MCF 10A (cell line): ENCODE measurements at regions of chr11 and their contacts with region 1.

Region 1: DNA sequence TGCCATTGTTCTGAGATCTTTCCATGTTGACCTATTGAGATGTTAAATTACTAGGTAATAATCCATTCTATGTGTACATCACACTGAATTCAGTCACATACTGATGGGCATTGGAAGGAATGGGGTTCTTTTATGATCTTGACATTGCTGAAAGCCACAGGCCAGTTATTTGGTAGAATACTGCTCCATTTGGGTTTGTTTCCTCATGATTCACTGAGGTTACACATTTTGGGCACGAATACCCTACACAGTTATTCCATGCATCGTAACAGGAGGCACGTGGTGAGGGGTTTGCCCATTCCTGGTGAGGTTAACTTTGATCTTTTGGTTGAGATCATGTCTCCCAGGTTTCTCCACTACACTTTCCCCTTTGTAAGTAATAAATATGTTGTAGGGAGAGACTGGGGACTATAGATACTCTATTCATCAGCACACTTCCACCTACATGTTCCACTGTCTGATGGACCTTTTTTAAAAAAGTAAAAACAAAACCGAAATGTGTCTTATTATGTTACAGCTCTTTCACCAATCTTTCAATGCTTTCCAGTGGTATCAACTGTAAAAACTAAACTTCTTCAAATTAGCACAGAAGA is 12.0 kb upstream of the FOLR1 start:
- DNase-seq: no peak
- H3K4me3 Mint-ChIP-seq: no peak overlapping the region
- H3K27ac Mint-ChIP-seq: peak overlapping the region; percentile 44
- H3K4me1 Mint-ChIP-seq: peaks cover 22% of the 10 kb centered on the region
- H3K27me3 Mint-ChIP-seq: no peaks in the 10 kb centered on the region
- CTCF ChIP-seq: no peak

Region 2: DNA sequence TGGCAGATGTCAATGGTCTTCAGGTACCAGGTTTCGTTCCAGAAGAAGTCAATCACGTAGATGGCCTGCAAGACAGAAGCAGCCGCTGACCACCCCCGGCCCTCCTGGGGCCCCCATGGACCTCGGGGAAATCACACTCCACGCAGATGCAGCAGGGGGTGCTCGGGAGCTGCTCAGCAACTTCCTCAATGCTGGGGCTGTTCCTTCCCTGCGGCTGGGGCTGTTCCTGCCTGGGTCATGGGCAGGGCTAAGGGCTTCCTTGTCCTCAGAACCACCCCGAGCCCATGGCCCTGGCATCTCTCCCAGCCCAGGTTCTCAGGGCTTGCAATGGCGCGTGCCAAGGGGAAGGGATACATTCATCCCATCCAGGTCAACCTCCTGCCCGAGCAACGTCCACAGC is 742.0 kb before region 1 on chr11:
- CTCF ChIA-PET with region 1: no interaction called
- POLR2A ChIA-PET with region 1: no interaction called
- intact Hi-C with region 1: no loop called
- DNase-seq: no peak
- H3K4me3 Mint-ChIP-seq: no peak overlapping the region
- H3K27ac Mint-ChIP-seq: no peak overlapping the region
- H3K4me1 Mint-ChIP-seq: peaks cover 14% of the 10 kb centered on the region
- H3K27me3 Mint-ChIP-seq: no peaks in the 10 kb centered on the region
- CTCF ChIP-seq: no peak

Region 3: DNA sequence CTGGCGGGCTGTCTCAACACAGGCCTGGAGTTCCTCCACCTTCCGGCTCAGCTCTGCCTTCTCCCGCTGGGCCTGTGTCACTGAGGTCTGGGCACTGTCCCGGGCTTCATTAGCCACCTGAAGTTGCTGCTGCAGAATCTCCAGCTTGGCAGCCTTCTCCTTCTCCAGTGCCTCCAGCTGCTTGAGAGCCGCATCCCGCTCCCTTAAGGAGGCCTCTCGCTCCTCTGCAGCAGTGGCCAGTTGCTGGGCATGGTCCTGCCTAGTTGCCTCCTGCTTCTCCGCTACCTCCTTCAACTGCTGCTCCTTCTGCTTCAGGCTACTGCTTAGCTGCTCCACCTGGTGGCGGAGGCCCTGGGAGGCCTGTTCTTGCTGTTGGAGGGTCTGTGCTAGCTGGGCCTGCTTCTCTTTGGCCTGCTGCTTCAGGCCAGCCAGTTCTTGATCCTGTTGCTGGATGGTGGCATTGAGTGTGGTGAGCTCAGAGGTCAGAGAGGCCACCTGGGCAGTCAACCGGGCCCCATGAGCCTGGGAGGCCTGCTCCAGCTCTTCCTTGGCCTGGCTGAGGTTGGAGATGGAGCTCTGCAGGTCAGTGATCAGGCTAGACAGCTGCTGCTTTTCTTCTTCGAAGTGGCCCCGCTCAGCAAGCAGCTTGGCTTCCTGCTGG is 164.3 kb before region 1 on chr11:
- CTCF ChIA-PET with region 1: interaction called, 24 read pairs
- POLR2A ChIA-PET with region 1: interaction called, 4 read pairs
- intact Hi-C with region 1: no loop called
- DNase-seq: no peak
- H3K4me3 Mint-ChIP-seq: no peak overlapping the region
- H3K27ac Mint-ChIP-seq: no peak overlapping the region
- H3K4me1 Mint-ChIP-seq: peaks cover 34% of the 10 kb centered on the region
- H3K27me3 Mint-ChIP-seq: no peaks in the 10 kb centered on the region
- CTCF ChIP-seq: peak; percentile 20

Region 4: DNA sequence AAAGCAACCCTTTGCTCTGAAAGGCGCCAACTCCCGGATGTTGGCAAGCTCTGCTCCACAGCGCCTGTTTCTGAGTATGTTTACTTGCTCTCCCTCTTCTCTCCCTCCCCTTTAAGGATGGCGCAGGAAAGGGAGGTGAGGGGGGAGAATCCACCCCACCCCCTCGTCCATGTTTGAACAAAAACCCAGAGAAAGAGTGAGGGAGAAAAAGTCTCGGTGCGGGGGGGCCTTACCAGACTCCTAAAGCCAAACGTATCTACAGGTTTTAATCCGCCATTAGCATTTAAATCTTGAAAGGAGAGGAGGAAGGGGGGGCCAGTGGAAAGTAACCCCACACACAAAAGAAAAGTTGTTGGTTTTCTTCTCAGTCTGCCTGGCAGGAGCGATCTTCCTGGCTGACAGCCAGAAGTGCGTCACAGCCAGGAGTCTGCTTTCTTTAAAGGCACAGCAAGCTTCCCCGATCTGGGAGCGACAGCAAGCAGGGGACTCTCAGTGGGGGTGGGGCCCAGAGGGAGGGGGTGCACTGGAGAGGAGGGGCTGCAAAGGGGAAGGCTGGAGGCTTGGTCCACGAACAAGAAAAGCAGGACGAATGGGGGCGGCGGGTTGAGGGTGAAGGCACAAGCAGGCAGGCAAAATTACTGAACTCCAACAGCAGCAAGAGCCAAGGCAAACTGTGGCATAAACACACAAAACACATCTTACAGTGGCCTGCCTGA is 139.0 kb before region 1 on chr11:
- CTCF ChIA-PET with region 1: interaction called, 13 read pairs
- POLR2A ChIA-PET with region 1: interaction called, 11 read pairs
- intact Hi-C with region 1: no loop called
- DNase-seq: peak; percentile 91
- H3K4me3 Mint-ChIP-seq: no peak overlapping the region
- H3K27ac Mint-ChIP-seq: no peak overlapping the region
- H3K4me1 Mint-ChIP-seq: peaks cover 26% of the 10 kb centered on the region
- H3K27me3 Mint-ChIP-seq: no peaks in the 10 kb centered on the region
- CTCF ChIP-seq: no peak

Region 5: GRCh38 chr11:72102946-72103753 is 76.8 kb before region 1 on chr11 and contains the start of gene LAMTOR1:
- CTCF ChIA-PET with region 1: interaction called, 47 read pairs
- POLR2A ChIA-PET with region 1: interaction called, 17 read pairs
- intact Hi-C with region 1: no loop called
- DNase-seq: peak; percentile 98
- H3K4me3 Mint-ChIP-seq: peak within 1 kb of the TSS; percentile 100
- H3K27ac Mint-ChIP-seq: peak within 1 kb of the TSS; percentile 100
- H3K4me1 Mint-ChIP-seq: peaks cover 43% of the 10 kb centered on the region
- H3K27me3 Mint-ChIP-seq: no peaks in the 10 kb centered on the region
- CTCF ChIP-seq: peak; percentile 29
- total RNA-seq, gene LAMTOR1: 76.9 and 82.4 TPM in 2 replicates

Region 6: GRCh38 chr11:72209101-72209500 is 29.2 kb after region 1 on chr11:
- CTCF ChIA-PET with region 1: interaction called, 12 read pairs
- POLR2A ChIA-PET with region 1: no interaction called
- intact Hi-C with region 1: no loop called
- DNase-seq: no peak
- H3K4me3 Mint-ChIP-seq: no peak overlapping the region
- H3K27ac Mint-ChIP-seq: no peak overlapping the region
- H3K4me1 Mint-ChIP-seq: no peaks in the 10 kb centered on the region
- H3K27me3 Mint-ChIP-seq: peaks cover 26% of the 10 kb centered on the region
- CTCF ChIP-seq: no peak

Region 7: GRCh38 chr11:72413914-72414628 is 234.2 kb after region 1 on chr11:
- CTCF ChIA-PET with region 1: interaction called, 18 read pairs
- POLR2A ChIA-PET with region 1: no interaction called
- intact Hi-C with region 1: loop called (anchors 1 kb)
- DNase-seq: peak; percentile 85
- H3K4me3 Mint-ChIP-seq: no peak overlapping the region
- H3K27ac Mint-ChIP-seq: no peak overlapping the region
- H3K4me1 Mint-ChIP-seq: peaks cover 5% of the 10 kb centered on the region
- H3K27me3 Mint-ChIP-seq: no peaks in the 10 kb centered on the region
- CTCF ChIP-seq: peak; percentile 82